ENCODE measurements at regions of chr17 and their contacts with region 1.

Region 1: GRCh38 chr17:76868176-76868668 is at the start of gene MGAT5B:
- DNase-seq: peak; percentile 59 to 85
- H3K4me3 ChIP-seq: peak within 1 kb of the TSS; percentile 48; the same call in 1 of the 2 replicates
- H3K27ac ChIP-seq: no peak within 1 kb of the TSS
- H3K4me1 ChIP-seq: peaks cover 43% of the 10 kb centered on the region
- H3K27me3 ChIP-seq: no peaks in the 10 kb centered on the region
- CTCF ChIP-seq: peak; percentile 45; the same call in 1 of the 2 replicates
- total RNA-seq, gene MGAT5B: 13.9 and 14.3 TPM in 2 replicates

Region 2: DNA sequence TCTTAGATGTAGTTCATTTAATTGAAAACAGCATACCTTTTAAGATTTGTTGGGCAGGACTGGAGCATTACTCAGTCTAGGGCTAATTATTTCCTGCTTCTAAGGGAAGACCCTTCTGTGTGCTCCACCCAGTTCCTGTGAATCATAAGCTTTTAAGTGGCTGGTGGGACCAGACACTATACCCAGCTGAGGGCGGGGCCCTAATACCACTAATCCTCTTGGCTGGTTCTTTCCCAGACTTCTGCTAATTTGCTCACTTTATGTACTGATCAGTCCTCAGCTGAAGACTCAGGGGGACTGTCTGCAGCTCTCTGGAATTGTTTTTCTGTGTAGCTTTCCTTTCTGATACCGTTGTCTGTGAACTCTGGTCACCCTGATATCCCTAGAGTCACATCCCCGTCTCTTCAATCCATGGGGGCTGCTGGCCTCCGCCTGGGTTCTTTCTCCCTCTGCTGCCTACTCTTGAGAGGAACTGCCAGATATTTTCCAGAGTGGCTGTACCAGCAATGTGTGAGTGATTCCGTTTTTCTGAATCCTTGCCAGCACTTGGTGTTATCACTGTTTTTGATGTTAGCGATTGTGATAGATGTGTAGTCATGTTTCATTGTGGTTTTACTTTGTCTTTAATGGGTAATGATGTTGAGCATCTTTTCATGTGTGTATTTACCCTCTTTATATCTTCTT is 95.2 kb before region 1 on chr17:
- CTCF ChIA-PET with region 1: no interaction called
- POLR2A ChIA-PET with region 1: no interaction called
- intact Hi-C with region 1: no loop called
- DNase-seq: peak; percentile 29 to 66
- H3K4me3 ChIP-seq: no peak overlapping the region
- H3K27ac ChIP-seq: peak overlapping the region; percentile 45; the same call in 1 of the 2 replicates
- H3K4me1 ChIP-seq: peaks cover 13% of the 10 kb centered on the region; the same call in 1 of the 2 replicates
- H3K27me3 ChIP-seq: no peaks in the 10 kb centered on the region
- CTCF ChIP-seq: no peak

Region 3: DNA sequence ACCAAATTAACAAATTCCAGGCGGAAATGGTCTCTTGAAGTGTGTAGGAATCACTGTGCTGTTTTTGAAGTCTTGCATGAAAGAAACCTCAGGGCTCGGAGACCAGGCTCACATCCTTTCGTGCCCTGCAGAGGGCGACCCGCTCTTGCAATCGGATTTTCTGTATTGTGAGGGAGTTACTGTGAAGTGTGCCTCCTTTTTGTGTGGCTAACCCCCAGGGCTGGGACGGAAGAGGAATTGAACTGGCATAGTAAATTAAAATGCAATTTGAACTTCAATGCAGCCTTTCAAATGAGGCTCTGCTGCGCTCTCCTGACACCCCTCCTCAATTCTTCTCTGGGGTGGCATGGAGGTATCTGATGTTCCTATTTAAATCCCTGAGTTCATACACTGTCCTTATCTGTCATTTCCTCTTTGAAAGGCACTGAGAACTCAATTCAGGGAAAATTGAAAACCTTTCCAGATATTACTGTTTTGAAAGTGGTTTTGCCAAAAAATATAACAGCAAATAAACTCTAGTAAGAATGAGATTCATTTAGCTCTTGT is 51.6 kb before region 1 on chr17:
- CTCF ChIA-PET with region 1: interaction called, 7 read pairs
- POLR2A ChIA-PET with region 1: interaction called, 3 read pairs
- intact Hi-C with region 1: loop called (anchors 2 kb)
- DNase-seq: peak; percentile 40 to 43
- H3K4me3 ChIP-seq: no peak overlapping the region
- H3K27ac ChIP-seq: no peak overlapping the region
- H3K4me1 ChIP-seq: no peaks in the 10 kb centered on the region
- H3K27me3 ChIP-seq: no peaks in the 10 kb centered on the region
- CTCF ChIP-seq: peak; percentile 60

Region 4: DNA sequence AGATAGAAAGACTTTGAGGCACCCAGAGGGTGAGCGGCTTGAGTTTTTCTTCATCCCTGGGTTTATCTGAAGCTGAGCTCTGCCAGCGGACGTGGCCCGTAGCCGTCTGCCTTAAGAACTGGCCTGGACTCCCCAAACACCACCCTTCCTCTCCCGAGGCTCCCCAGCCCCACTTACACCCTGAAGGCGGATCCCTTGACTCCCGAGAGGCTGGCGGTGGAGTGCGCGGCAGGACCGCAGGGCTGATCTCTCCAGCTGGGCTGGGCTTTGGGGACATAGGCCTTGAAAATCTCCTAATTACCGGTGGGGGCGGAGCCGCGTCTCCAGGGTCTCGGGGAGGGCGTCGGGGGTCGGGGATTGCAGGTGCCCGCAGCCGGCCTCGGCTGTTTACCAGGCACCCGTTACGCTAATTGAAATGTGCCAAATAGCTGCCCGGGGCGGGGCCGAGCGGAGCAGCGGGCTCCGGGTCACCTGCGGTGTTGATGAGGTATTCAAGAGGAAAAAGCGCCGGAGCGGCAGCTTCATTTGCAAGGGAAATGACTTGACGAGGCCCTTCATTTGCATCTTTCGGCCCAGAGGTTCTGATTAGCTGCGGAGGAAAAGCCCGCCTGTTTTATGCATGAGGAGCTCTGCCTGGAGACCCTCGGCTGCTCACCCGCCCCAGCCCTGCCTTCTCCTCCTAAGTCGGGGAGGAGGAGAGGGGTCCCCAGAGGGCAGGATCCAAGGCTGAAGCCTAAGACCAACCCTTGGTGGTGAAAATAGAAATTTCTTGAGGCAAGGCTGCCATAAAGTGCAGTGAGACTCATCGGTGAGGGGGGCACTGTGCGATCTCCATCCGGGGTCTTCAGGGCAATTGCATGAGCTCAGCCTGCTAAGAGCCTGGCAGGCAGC is 100.7 kb after region 1 on chr17:
- CTCF ChIA-PET with region 1: no interaction called
- POLR2A ChIA-PET with region 1: no interaction called
- intact Hi-C with region 1: loop called (anchors 10 kb)
- DNase-seq: peak; percentile 60 to 69
- H3K4me3 ChIP-seq: peak overlapping the region; percentile 59
- H3K27ac ChIP-seq: 0 out of 2 replicates have a peak overlapping the region, but pooled peaks have one; percentile 21
- H3K4me1 ChIP-seq: peaks cover 16% of the 10 kb centered on the region
- H3K27me3 ChIP-seq: no peaks in the 10 kb centered on the region
- CTCF ChIP-seq: no peak

Region 5: GRCh38 chr17:76983075-76983775 is 115.0 kb after region 1 on chr17:
- CTCF ChIA-PET with region 1: no interaction called
- POLR2A ChIA-PET with region 1: no interaction called
- intact Hi-C with region 1: no loop called
- DNase-seq: no peak
- H3K4me3 ChIP-seq: no peak overlapping the region
- H3K27ac ChIP-seq: no peak overlapping the region
- H3K4me1 ChIP-seq: no peaks in the 10 kb centered on the region
- H3K27me3 ChIP-seq: no peaks in the 10 kb centered on the region
- CTCF ChIP-seq: no peak

Region 6: GRCh38 chr17:77088455-77089123 is 220.4 kb after region 1 on chr17:
- CTCF ChIA-PET with region 1: interaction called, 3 read pairs
- POLR2A ChIA-PET with region 1: interaction called, 15 read pairs
- intact Hi-C with region 1: no loop called
- DNase-seq: peak; percentile 85 to 88
- H3K4me3 ChIP-seq: peak overlapping the region; percentile 81
- H3K27ac ChIP-seq: peak overlapping the region; percentile 72
- H3K4me1 ChIP-seq: peaks cover 4% of the 10 kb centered on the region; the same call in 1 of the 2 replicates
- H3K27me3 ChIP-seq: no peaks in the 10 kb centered on the region
- CTCF ChIP-seq: peak; percentile 50; the same call in 1 of the 2 replicates

Region 7: GRCh38 chr17:77247048-77247541 is 378.9 kb after region 1 on chr17:
- CTCF ChIA-PET with region 1: no interaction called
- POLR2A ChIA-PET with region 1: interaction called, 4 read pairs
- intact Hi-C with region 1: loop called (anchors 5 kb)
- DNase-seq: peak in 1 of 2 experiments; percentile 77
- H3K4me3 ChIP-seq: peak overlapping the region; percentile 49; the same call in 1 of the 2 replicates
- H3K27ac ChIP-seq: no peak overlapping the region
- H3K4me1 ChIP-seq: no peaks in the 10 kb centered on the region; the same call in 1 of the 2 replicates
- H3K27me3 ChIP-seq: no peaks in the 10 kb centered on the region
- CTCF ChIP-seq: peak; percentile 88

Region 8: GRCh38 chr17:77494664-77495435 is 626.6 kb after region 1 on chr17:
- CTCF ChIA-PET with region 1: no interaction called
- POLR2A ChIA-PET with region 1: no interaction called
- intact Hi-C with region 1: loop called (anchors 2 kb)
- DNase-seq: peak; percentile 44 to 72
- H3K4me3 ChIP-seq: no peak overlapping the region
- H3K27ac ChIP-seq: no peak overlapping the region
- H3K4me1 ChIP-seq: no peaks in the 10 kb centered on the region
- H3K27me3 ChIP-seq: no peaks in the 10 kb centered on the region
- CTCF ChIP-seq: peak; percentile 94